ENCODE measurements at regions of chr18 and their contacts with region 1.

Region 1: GRCh38 chr18:9925369-9925768 is 11.6 kb downstream of the VAPA start:
- DNase-seq: no peak

Region 2: GRCh38 chr18:9827641-9828505 is 97.5 kb before region 1 on chr18:
- intact Hi-C with region 1: loop called in 1 of 2 experiments (anchors 10 kb)
- DNase-seq: peak; percentile 86